Sigmoid colon (tissue), 7 donors: ENCODE measurements at regions of chr6 and their contacts with region 1.

Region 1: GRCh38 chr6:43506667-43507471 is 3.3 kb downstream of the LRRC73 start:
- DNase-seq: peak; percentile 89
- H3K4me3 ChIP-seq: no peak overlapping the region
- H3K27ac ChIP-seq: peak overlapping the region in 1 of 4 donors; percentile 26
- H3K4me1 ChIP-seq: peaks cover 0 to 25% (median 22%) of the 10 kb centered on the region in 4 donors
- H3K27me3 ChIP-seq: peaks cover 0 to 14% (median 0%) of the 10 kb centered on the region in 3 donors
- CTCF ChIP-seq: peak; percentile 79 to 97 (median 92)
- EP300 ChIP-seq: no peak
- POLR2A ChIP-seq: no peak

Region 2: DNA sequence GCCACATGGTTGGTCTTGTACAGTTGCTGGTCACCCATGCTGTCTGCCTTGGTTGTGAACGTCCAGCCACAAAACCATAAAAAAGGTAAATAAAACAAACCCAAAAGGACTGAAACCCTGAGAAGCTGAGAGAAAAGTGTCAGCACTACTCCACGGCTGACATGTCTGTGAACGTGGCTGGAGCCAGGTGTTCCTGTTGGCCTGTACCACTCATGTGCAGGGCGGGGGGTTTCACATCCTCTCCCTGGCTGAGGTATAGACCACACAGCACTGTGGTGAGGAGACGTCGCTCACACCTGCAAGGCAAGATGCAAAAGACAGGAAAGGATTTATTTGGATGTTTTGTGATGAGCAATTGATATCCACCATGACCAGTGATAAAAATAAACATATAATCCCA is 1237.3 kb before region 1 on chr6:
- intact Hi-C with region 1: no loop called
- DNase-seq: no peak
- H3K4me3 ChIP-seq: no peak overlapping the region
- H3K27ac ChIP-seq: no peak overlapping the region
- H3K4me1 ChIP-seq: peaks cover 0 to 10% (median 3%) of the 10 kb centered on the region in 4 donors
- H3K27me3 ChIP-seq: no peaks in the 10 kb centered on the region
- CTCF ChIP-seq: no peak
- EP300 ChIP-seq: no peak
- POLR2A ChIP-seq: no peak

Region 3: DNA sequence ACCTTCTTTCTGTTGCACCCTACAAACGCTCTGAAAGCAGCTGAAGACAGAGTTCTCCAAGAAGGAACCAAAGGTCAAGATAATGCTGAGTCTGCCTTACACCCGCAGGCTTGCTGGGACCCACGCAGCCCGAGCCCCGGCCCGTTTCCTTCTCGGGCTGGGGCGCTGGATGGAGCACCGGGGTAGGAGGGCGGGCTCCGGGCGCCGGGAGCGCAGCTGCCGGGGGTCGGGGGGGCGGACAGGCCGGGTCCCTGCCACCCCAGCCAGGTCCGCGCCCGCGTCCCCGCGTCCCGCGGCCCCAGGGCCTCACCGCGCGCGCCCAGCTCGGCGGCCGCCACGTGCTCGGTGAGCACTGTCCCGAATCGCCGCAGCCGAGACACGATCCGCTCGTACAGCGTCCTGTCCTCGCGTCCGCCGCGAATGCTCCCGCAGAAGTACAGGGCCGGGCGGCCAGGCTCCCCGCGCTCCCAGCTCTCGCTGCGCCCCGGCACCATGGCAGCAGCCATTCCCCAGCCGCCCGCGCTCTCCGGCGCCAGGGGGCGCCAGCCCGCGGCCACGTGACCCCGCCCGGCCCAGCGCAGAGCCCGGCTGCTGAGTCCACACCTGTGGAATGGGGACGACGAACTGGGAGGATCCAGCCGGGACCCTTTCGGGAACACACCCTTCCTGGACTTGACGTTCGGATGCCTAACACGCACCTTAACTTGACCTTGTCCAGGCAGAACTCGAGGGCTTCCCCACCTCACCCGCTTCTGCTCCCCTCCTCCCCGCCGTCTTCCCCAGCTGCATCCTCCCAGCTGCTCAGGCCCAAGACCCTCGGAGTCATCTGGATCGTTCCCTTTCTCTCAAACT is 277.7 kb before region 1 on chr6 and contains the start of gene DNPH1:
- intact Hi-C with region 1: loop called (anchors 5 kb)
- DNase-seq: peak; percentile 85
- H3K4me3 ChIP-seq: peak within 1 kb of the TSS; percentile 39 to 75 (median 72)
- H3K27ac ChIP-seq: peak within 1 kb of the TSS; percentile 61 to 78 (median 73)
- H3K4me1 ChIP-seq: peaks cover 0 to 15% (median 11%) of the 10 kb centered on the region in 4 donors
- H3K27me3 ChIP-seq: no peaks in the 10 kb centered on the region
- CTCF ChIP-seq: peak; percentile 14 to 95 (median 54)
- EP300 ChIP-seq: no peak
- POLR2A ChIP-seq: no peak
- total RNA-seq, gene DNPH1: 32.1 to 96.0 (median 90.3) TPM

Region 4: GRCh38 chr6:43269273-43270007 is 237.4 kb before region 1 on chr6:
- intact Hi-C with region 1: loop called (anchors 5 kb)
- DNase-seq: no peak
- H3K4me3 ChIP-seq: peak overlapping the region; percentile 10 to 48 (median 39)
- H3K27ac ChIP-seq: peak overlapping the region; percentile 72 to 92 (median 76)
- H3K4me1 ChIP-seq: peaks cover 0 to 27% (median 25%) of the 10 kb centered on the region in 4 donors
- H3K27me3 ChIP-seq: peaks cover 0 to 4% (median 4%) of the 10 kb centered on the region in 3 donors
- CTCF ChIP-seq: no peak
- EP300 ChIP-seq: no peak
- POLR2A ChIP-seq: no peak

Region 5: DNA sequence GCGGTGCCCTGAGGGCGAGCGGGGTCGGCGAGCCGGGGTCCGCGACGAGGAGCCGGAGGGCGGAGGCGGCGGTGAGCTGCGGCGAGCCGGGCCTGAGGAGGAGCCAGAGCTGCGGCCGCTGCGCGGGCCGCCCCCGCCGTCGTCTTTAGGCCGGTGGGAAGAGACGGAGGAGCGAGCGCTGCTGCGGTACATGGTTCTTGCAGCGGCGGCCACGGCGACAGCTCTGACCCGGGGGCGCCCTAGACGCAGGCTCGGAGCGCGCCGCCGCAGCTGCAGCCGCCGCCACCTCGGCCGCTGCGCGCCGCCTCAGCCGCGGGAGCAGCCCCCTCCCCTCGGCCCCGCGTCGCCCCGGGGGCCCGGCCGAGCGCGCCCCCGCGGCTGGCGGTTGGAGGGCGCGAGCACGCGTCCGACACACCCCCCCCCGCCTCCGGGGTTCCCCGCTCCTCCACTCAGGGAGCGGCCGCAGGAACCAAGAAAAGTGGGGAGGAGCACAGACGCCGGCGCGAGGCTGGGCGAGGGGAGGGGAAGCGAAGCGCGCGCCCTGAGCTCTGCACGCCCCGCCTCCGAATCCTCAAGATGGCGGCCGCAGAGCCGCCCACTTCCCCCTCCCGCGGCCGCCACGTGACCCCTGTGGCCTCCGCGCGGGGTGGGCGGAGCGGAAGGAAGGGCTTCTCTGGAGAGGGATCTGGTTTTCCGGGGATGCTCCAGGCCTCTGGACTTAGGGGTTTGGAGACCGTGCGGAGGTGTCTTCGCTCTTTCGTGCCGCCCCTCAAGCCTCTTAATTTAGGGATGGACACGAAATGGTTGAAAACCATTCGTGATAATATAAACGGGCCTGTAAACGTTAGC is 137.5 kb before region 1 on chr6 and contains the start of gene ZNF318:
- intact Hi-C with region 1: loop called (anchors 5 kb)
- DNase-seq: peak; percentile 98
- H3K4me3 ChIP-seq: peak within 1 kb of the TSS; percentile 70 to 94 (median 87)
- H3K27ac ChIP-seq: peak within 1 kb of the TSS; percentile 84 to 95 (median 92)
- H3K4me1 ChIP-seq: peaks cover 0 to 33% (median 23%) of the 10 kb centered on the region in 4 donors
- H3K27me3 ChIP-seq: no peaks in the 10 kb centered on the region
- CTCF ChIP-seq: no peak
- EP300 ChIP-seq: peak in 1 of 4 donors; percentile 45
- POLR2A ChIP-seq: no peak
- total RNA-seq, gene ZNF318: 11.7 to 19.1 (median 15.1) TPM

Region 6: DNA sequence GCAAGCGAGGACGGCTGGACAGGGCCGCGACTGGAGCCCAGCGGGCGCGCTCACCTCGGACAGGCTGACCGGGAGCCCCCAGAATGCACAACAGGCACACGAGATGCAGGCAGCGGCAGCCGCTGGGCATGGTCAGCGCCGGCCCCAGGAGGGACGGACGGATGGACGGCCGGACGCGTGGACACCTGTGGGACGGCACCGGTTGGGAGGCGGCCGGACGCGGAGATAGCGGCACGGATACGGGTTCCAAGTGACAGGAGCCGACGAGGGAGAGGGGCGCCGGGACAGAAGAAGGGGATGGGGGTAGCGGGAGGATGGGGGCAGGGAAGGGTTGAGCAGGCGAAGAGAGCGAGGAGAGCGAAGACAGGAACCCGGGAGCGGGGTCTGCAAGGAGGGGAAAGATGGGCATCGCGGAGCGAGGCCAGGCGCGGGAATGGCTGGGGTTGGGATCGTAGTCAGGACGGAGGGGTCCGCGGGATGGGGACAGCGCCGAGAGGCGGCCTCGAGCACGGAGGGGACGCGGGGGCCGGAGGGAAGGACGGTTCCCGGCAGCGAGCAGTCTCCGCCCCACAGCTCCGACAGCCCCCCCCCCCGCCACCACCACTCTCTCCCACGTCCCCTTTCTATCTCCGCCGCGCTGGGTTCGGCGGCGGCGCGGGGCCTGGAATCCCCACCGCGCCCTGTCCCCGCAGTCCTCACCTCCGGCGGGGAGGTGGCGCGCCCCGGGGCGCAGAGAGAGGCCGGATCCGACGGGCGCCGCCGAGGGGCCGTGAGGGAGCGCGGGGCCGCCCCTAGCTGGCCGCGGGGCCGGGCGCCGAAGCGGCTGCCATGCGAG is 52.0 kb before region 1 on chr6:
- intact Hi-C with region 1: loop called (anchors 1 kb)
- DNase-seq: peak; percentile 92
- H3K4me3 ChIP-seq: peak overlapping the region; percentile 25 to 54 (median 48)
- H3K27ac ChIP-seq: no peak overlapping the region
- H3K4me1 ChIP-seq: peaks cover 0 to 22% (median 18%) of the 10 kb centered on the region in 4 donors
- H3K27me3 ChIP-seq: peaks cover 15 to 54% (median 31%) of the 10 kb centered on the region in 3 donors
- CTCF ChIP-seq: peak in 1 of 4 experiments; percentile 31
- EP300 ChIP-seq: no peak
- POLR2A ChIP-seq: no peak

Region 7: GRCh38 chr6:43477235-43478007 is 29.4 kb before region 1 on chr6 and contains the start of gene TJAP1:
- intact Hi-C with region 1: loop called (anchors 2 kb)
- DNase-seq: peak; percentile 96
- H3K4me3 ChIP-seq: peak within 1 kb of the TSS; percentile 59 to 82 (median 80)
- H3K27ac ChIP-seq: peak within 1 kb of the TSS; percentile 69 to 87 (median 85)
- H3K4me1 ChIP-seq: peaks cover 0 to 32% (median 20%) of the 10 kb centered on the region in 4 donors
- H3K27me3 ChIP-seq: no peaks in the 10 kb centered on the region
- CTCF ChIP-seq: no peak
- EP300 ChIP-seq: no peak
- POLR2A ChIP-seq: peak; percentile 54 to 74
- total RNA-seq, gene TJAP1: 14.8 to 27.1 (median 23.6) TPM